ENCODE measurements at regions of chr5 and their contacts with region 1.

Region 1: DNA sequence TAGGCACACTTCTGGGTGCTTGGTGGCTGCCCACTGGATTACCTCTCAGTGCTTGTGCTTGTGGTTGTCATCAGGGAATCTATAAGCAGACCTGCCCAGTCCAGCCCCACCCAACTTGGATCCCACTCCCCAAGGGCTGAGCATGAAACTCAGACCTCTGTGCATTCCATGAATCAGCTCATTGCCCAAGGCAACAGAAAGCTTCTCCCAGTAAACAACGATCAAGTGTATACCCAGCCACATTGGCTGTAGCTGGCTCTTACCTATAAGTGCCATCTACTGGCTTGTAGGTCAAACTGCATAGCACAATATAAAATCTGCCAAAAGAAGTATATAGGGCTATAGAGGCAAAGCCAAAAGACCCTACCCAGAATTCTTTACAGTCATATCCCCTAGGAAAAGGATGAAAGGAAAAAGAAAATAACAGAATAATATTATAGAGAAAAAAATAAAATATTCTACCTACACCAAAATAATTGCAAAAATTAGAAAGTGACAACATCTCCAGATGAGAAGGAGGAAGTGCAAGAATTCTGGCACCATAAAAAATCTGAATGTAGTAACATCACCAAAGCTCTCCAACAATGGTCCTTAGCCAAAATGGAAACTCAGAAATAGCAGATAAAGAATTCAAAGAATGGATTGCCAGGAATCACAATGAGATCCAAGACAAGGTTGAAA is 321.0 kb upstream of the TRPC7 start:
- DNase-seq: peak; percentile 51
- H3K4me3 ChIP-seq: no peak overlapping the region
- H3K27ac ChIP-seq: peak overlapping the region; percentile 32
- H3K4me1 ChIP-seq: peaks cover 3% of the 10 kb centered on the region
- H3K27me3 ChIP-seq: no peaks in the 10 kb centered on the region
- CTCF ChIP-seq: peak; percentile 46 to 55
- POLR2A ChIP-seq: no peak

Region 2: GRCh38 chr5:135934939-135935338 is 751.4 kb before region 1 on chr5:
- CTCF ChIA-PET with region 1: no interaction called
- POLR2A ChIA-PET with region 1: no interaction called
- dilution Hi-C with region 1: no loop called
- intact Hi-C with region 1: no loop called
- DNase-seq: no peak
- H3K4me3 ChIP-seq: no peak overlapping the region
- H3K27ac ChIP-seq: no peak overlapping the region
- H3K4me1 ChIP-seq: no peaks in the 10 kb centered on the region
- H3K27me3 ChIP-seq: peaks cover 31 to 75% of the 10 kb centered on the region in 2 experiments
- CTCF ChIP-seq: no peak
- POLR2A ChIP-seq: no peak

Region 3: GRCh38 chr5:136308212-136308795 is 378.0 kb before region 1 on chr5:
- CTCF ChIA-PET with region 1: no interaction called
- POLR2A ChIA-PET with region 1: no interaction called
- dilution Hi-C with region 1: no loop called
- intact Hi-C with region 1: loop called (anchors 5 kb)
- DNase-seq: no peak
- H3K4me3 ChIP-seq: no peak overlapping the region
- H3K27ac ChIP-seq: no peak overlapping the region
- H3K4me1 ChIP-seq: no peaks in the 10 kb centered on the region
- H3K27me3 ChIP-seq: peaks cover 7 to 11% of the 10 kb centered on the region in 2 experiments
- CTCF ChIP-seq: no peak
- POLR2A ChIP-seq: no peak

Region 4: DNA sequence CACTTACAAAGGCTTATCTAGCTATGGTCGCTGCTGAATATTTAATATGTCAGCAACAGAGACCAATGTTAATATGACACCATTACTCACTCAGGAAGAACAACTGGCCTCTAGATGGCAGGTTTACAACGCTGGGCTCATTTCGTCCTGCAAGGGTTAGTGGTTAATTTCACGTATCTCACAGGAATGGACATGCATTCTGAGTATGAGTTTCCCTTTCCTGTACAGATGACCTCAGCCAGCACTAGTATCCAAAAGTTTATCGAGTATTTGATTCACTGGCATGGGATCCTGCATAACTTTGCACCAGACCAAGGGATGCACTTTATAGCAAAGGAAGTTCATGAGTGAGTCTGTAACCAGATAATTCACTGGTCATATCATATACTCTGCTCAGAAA is 312.3 kb before region 1 on chr5:
- CTCF ChIA-PET with region 1: interaction called, 49 read pairs
- POLR2A ChIA-PET with region 1: no interaction called
- dilution Hi-C with region 1: no loop called
- intact Hi-C with region 1: loop called (anchors 1 kb)
- DNase-seq: peak; percentile 72
- H3K4me3 ChIP-seq: no peak overlapping the region
- H3K27ac ChIP-seq: no peak overlapping the region
- H3K4me1 ChIP-seq: peaks cover 3% of the 10 kb centered on the region
- H3K27me3 ChIP-seq: peaks cover 0 to 12% of the 10 kb centered on the region in 2 experiments
- CTCF ChIP-seq: peak; percentile 51 to 58
- POLR2A ChIP-seq: no peak

Region 5: GRCh38 chr5:136446565-136446964 is 239.8 kb before region 1 on chr5:
- CTCF ChIA-PET with region 1: interaction called, 5 read pairs
- POLR2A ChIA-PET with region 1: no interaction called
- dilution Hi-C with region 1: no loop called
- intact Hi-C with region 1: loop called (anchors 5 kb)
- DNase-seq: no peak
- H3K4me3 ChIP-seq: no peak overlapping the region
- H3K27ac ChIP-seq: no peak overlapping the region
- H3K4me1 ChIP-seq: no peaks in the 10 kb centered on the region
- H3K27me3 ChIP-seq: peaks cover 0 to 2% of the 10 kb centered on the region in 2 experiments
- CTCF ChIP-seq: no peak
- POLR2A ChIP-seq: no peak

Region 6: GRCh38 chr5:136638077-136638476 is 48.3 kb before region 1 on chr5:
- CTCF ChIA-PET with region 1: interaction called, 27 read pairs
- POLR2A ChIA-PET with region 1: no interaction called
- dilution Hi-C with region 1: no loop called
- intact Hi-C with region 1: no loop called
- DNase-seq: no peak
- H3K4me3 ChIP-seq: no peak overlapping the region
- H3K27ac ChIP-seq: no peak overlapping the region
- H3K4me1 ChIP-seq: peaks cover 12% of the 10 kb centered on the region
- H3K27me3 ChIP-seq: no peaks in the 10 kb centered on the region
- CTCF ChIP-seq: peak in 1 of 2 donors; percentile 1
- POLR2A ChIP-seq: no peak

Region 7: GRCh38 chr5:136674178-136674577 is 12.2 kb before region 1 on chr5:
- CTCF ChIA-PET with region 1: interaction called, 10 read pairs
- POLR2A ChIA-PET with region 1: no interaction called
- dilution Hi-C with region 1: no loop called
- intact Hi-C with region 1: no loop called
- DNase-seq: no peak
- H3K4me3 ChIP-seq: no peak overlapping the region
- H3K27ac ChIP-seq: no peak overlapping the region
- H3K4me1 ChIP-seq: no peaks in the 10 kb centered on the region
- H3K27me3 ChIP-seq: no peaks in the 10 kb centered on the region
- CTCF ChIP-seq: no peak
- POLR2A ChIP-seq: no peak

Region 8: DNA sequence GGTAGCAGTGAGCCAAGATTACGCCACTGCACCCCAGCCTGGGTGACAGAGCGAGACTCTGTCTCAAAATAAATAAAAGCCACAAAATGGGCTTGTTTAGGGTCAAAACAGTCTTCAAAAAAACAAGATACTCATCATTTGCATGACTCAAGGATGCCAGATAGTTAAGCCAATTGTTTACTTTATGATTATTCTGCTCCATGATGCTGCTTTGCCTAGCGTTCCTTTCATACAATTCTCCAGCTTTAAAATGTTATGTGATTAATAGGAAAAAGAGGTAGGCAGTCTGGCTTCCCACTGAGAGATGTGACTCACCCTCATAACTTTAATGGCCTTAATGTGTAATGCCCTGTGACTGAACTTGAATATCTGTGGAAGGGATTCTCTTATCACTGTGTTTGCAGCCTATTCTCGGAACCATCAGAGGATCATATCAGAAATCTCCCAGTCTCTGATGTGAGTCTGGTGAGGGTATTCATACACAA is 43.6 kb after region 1 on chr5:
- CTCF ChIA-PET with region 1: no interaction called
- POLR2A ChIA-PET with region 1: no interaction called
- dilution Hi-C with region 1: no loop called
- intact Hi-C with region 1: no loop called
- DNase-seq: peak; percentile 80
- H3K4me3 ChIP-seq: no peak overlapping the region
- H3K27ac ChIP-seq: peak overlapping the region; percentile 43
- H3K4me1 ChIP-seq: peaks cover 13% of the 10 kb centered on the region
- H3K27me3 ChIP-seq: peaks cover 0 to 2% of the 10 kb centered on the region in 2 experiments
- CTCF ChIP-seq: no peak
- POLR2A ChIP-seq: no peak